Mammary epithelial cell (primary cell): ENCODE measurements at regions of chr1 and their contacts with region 1.

Region 1: DNA sequence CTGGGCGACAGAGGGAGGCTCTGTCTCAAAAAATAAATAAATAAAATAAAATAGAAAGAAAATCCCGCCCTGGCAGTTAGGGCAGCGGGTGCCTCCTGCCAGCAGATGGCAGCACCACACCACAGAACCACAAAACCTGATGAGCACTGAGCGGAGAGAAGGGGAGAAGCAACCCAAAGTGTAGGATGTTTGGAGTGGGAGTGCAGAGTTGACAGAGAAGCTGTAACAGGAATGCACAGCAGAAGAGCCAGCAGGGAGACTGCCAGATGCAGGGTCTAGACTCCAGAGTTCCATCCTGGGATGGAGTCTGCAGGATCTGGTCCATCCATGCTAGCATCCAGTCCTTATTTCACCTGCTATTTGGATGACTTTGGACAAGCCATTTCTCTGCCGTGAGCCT is 29.7 kb upstream of the KIRREL1 start:
- DNase-seq: peak; percentile 60
- H3K4me3 ChIP-seq: no peak overlapping the region
- H3K27ac ChIP-seq: no peak overlapping the region
- H3K4me1 ChIP-seq: peaks cover 31% of the 10 kb centered on the region
- H3K27me3 ChIP-seq: no peaks in the 10 kb centered on the region
- CTCF ChIP-seq: peak; percentile 87 to 89

Region 2: DNA sequence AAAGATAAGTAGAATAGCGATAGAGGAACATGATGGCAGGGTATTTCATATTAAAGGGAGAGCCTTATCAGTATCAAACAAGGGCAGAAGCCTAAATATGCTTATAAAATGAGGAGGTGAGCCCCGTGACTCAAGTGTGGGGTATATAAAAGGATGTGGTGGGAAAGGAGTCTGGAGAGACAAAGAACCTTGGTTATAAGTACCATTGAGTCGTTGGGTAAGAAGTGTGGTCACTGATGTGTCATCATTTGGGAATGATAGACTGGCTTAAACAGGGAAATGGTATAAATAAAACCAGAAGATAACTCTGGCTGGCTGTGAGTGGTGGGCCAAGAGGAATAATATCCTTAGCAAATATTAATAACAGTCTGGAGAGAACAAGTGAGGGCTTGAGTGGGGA is 111.2 kb before region 1 on chr1:
- CTCF ChIA-PET with region 1: no interaction called
- dilution Hi-C with region 1: loop called (anchors 10 kb)
- in situ Hi-C with region 1: no loop called
- intact Hi-C with region 1: no loop called
- DNase-seq: peak; percentile 90
- H3K4me3 ChIP-seq: no peak overlapping the region
- H3K27ac ChIP-seq: peak overlapping the region; percentile 31
- H3K4me1 ChIP-seq: peaks cover 18% of the 10 kb centered on the region
- H3K27me3 ChIP-seq: no peaks in the 10 kb centered on the region
- CTCF ChIP-seq: no peak

Region 3: GRCh38 chr1:157948312-157949073 is 15.2 kb before region 1 on chr1:
- CTCF ChIA-PET with region 1: no interaction called
- dilution Hi-C with region 1: no loop called
- in situ Hi-C with region 1: no loop called
- intact Hi-C with region 1: no loop called
- DNase-seq: peak; percentile 35
- H3K4me3 ChIP-seq: no peak overlapping the region
- H3K27ac ChIP-seq: no peak overlapping the region
- H3K4me1 ChIP-seq: no peaks in the 10 kb centered on the region
- H3K27me3 ChIP-seq: no peaks in the 10 kb centered on the region
- CTCF ChIP-seq: peak; percentile 77 to 87

Region 4: DNA sequence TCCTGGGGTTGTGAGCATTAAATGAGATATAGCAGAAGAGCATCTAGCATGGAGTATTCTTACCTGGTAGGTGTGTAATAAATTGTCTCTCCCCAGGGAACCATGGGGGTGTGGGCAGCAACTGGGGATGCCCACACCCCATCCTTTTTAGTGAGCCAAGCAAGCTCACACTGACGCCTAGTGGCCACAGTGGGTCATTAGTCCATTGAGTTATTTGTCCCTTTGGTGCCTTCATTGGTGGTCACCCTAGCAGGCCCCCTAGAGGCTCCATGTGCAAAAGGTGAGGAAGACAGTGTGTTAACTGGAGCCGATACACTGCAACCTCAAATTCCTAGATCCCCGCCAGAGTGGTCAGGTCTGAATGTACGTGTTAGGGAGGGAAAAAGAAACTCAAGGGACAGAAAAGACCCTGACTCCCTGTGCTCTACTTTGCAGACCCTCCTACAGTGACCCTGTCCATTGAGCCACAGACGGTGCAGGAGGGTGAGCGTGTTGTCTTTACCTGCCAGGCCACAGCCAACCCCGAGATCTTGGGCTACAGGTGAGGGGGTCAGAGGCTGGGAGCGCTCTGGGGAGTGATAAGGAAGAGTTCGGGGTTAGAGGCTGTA is 123.7 kb after region 1 on chr1:
- CTCF ChIA-PET with region 1: no interaction called
- dilution Hi-C with region 1: no loop called
- in situ Hi-C with region 1: no loop called
- intact Hi-C with region 1: loop called (anchors 1 kb)
- DNase-seq: peak; percentile 35
- H3K4me3 ChIP-seq: no peak overlapping the region
- H3K27ac ChIP-seq: no peak overlapping the region
- H3K4me1 ChIP-seq: no peaks in the 10 kb centered on the region
- H3K27me3 ChIP-seq: no peaks in the 10 kb centered on the region
- CTCF ChIP-seq: peak; percentile 86 to 92

Region 5: DNA sequence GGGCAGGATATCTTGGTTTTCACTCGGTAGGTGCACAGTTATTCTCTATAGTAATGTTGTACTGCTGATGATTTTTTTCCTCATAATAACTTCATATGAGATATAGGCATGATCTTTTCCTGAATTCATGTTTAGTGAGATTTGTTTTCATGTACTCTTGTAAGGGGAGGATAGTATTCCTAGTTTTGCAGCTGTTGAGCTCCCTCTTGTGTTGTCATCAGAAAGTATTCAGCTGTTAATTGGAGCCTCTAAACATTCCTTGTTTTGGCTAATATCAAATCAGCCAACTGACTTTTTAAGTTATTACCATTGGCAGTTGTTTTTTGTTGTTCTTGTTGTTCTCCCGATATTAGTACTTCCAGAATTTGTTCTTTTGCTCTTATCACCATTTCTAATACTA is 532.7 kb after region 1 on chr1:
- CTCF ChIA-PET with region 1: no interaction called
- dilution Hi-C with region 1: no loop called
- in situ Hi-C with region 1: no loop called
- intact Hi-C with region 1: loop called (anchors 5 kb)
- DNase-seq: peak; percentile 2
- H3K4me3 ChIP-seq: no peak overlapping the region
- H3K27ac ChIP-seq: no peak overlapping the region
- H3K4me1 ChIP-seq: no peaks in the 10 kb centered on the region
- H3K27me3 ChIP-seq: peaks cover 5% of the 10 kb centered on the region
- CTCF ChIP-seq: peak; percentile 21 to 37

Region 6: DNA sequence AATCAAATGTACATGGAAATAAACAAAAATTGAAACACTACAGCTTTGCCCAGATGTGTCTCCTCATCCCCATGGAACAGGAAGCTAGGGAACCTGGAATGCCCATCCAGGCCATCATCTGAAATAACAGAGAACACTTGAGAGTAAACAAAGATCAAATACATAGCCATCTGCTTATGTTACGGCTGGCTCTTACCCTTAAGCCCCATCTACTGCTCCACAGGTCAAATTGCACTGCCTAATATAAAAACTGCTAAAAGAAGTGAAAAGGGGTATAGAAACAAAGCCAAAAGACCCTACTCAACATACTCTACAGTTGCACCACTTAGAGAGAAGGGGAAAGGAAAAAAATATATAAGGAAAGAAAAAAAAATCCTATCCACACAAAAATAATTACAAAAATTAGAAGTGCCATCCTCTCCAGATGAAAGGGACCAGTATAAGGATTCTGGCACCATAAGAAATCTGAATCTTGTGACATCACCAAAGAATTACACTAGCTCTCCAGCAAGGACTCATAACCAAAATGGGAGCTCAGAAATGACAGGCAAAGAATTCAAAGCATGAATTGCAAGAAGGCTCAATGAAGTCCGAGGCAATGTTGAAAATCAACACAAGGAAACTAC is 563.6 kb after region 1 on chr1:
- CTCF ChIA-PET with region 1: no interaction called
- dilution Hi-C with region 1: no loop called
- in situ Hi-C with region 1: no loop called
- intact Hi-C with region 1: loop called (anchors 10 kb)
- DNase-seq: peak; percentile 2
- H3K4me3 ChIP-seq: no peak overlapping the region
- H3K27ac ChIP-seq: no peak overlapping the region
- H3K4me1 ChIP-seq: no peaks in the 10 kb centered on the region
- H3K27me3 ChIP-seq: peaks cover 2% of the 10 kb centered on the region
- CTCF ChIP-seq: no peak

Region 7: GRCh38 chr1:159071970-159072582 is 1108.4 kb after region 1 on chr1:
- CTCF ChIA-PET with region 1: no interaction called
- dilution Hi-C with region 1: no loop called
- in situ Hi-C with region 1: no loop called
- intact Hi-C with region 1: loop called (anchors 5 kb)
- DNase-seq: peak; percentile 46
- H3K4me3 ChIP-seq: no peak overlapping the region
- H3K27ac ChIP-seq: no peak overlapping the region
- H3K4me1 ChIP-seq: no peaks in the 10 kb centered on the region
- H3K27me3 ChIP-seq: no peaks in the 10 kb centered on the region
- CTCF ChIP-seq: peak; percentile 67